Caco-2 (cell line): ENCODE measurements at regions of chr3 and their contacts with region 1.

Region 1: GRCh38 chr3:165133188-165133899 is 55.0 kb upstream of the SI start:
- DNase-seq: peak in 1 of 2 experiments; percentile 7
- H3K4me3 ChIP-seq: no peak overlapping the region
- H3K4me3 Mint-ChIP-seq: peak overlapping the region; percentile 30
- H3K27ac Mint-ChIP-seq: no peak overlapping the region
- H3K4me1 ChIP-seq: peaks cover 14% of the 10 kb centered on the region
- H3K4me1 Mint-ChIP-seq: peaks cover 7% of the 10 kb centered on the region
- H3K27me3 ChIP-seq: no peaks in the 10 kb centered on the region
- H3K27me3 Mint-ChIP-seq: no peaks in the 10 kb centered on the region
- CTCF ChIP-seq: no peak

Region 2: GRCh38 chr3:165075695-165076094 is 57.6 kb before region 1 on chr3:
- CTCF ChIA-PET with region 1: no interaction called
- POLR2A ChIA-PET with region 1: no interaction called
- intact Hi-C with region 1: loop called (anchors 1 kb)
- DNase-seq: no peak
- H3K4me3 ChIP-seq: no peak overlapping the region
- H3K4me3 Mint-ChIP-seq: no peak overlapping the region
- H3K27ac Mint-ChIP-seq: no peak overlapping the region
- H3K4me1 ChIP-seq: no peaks in the 10 kb centered on the region
- H3K4me1 Mint-ChIP-seq: no peaks in the 10 kb centered on the region
- H3K27me3 ChIP-seq: no peaks in the 10 kb centered on the region
- H3K27me3 Mint-ChIP-seq: no peaks in the 10 kb centered on the region
- CTCF ChIP-seq: no peak

Region 3: GRCh38 chr3:165082650-165083049 is 50.7 kb before region 1 on chr3:
- CTCF ChIA-PET with region 1: no interaction called
- POLR2A ChIA-PET with region 1: no interaction called
- intact Hi-C with region 1: loop called (anchors 1 kb)
- DNase-seq: no peak
- H3K4me3 ChIP-seq: no peak overlapping the region
- H3K4me3 Mint-ChIP-seq: no peak overlapping the region
- H3K27ac Mint-ChIP-seq: no peak overlapping the region
- H3K4me1 ChIP-seq: no peaks in the 10 kb centered on the region
- H3K4me1 Mint-ChIP-seq: no peaks in the 10 kb centered on the region
- H3K27me3 ChIP-seq: no peaks in the 10 kb centered on the region
- H3K27me3 Mint-ChIP-seq: no peaks in the 10 kb centered on the region
- CTCF ChIP-seq: no peak

Region 4: DNA sequence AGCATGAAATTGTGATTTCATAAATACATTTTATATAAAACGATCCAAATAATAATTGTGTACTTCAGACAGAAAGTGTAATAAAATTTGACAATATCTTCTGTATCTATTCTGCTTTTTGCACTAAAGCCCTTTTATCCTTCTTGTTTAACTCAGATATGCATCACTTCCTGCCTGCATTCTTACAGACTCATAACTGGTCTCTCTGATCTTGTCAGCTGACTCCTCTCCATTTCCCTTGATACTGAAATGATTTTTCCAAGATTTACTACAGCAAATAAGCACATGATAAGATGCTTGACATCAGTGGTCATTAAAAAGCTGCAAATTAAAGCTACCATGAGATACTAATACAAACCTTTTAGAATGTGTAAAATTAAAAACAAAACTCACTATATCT is 29.7 kb before region 1 on chr3:
- CTCF ChIA-PET with region 1: no interaction called
- POLR2A ChIA-PET with region 1: no interaction called
- intact Hi-C with region 1: no loop called
- DNase-seq: no peak
- H3K4me3 ChIP-seq: no peak overlapping the region
- H3K4me3 Mint-ChIP-seq: no peak overlapping the region
- H3K27ac Mint-ChIP-seq: no peak overlapping the region
- H3K4me1 ChIP-seq: no peaks in the 10 kb centered on the region
- H3K4me1 Mint-ChIP-seq: no peaks in the 10 kb centered on the region
- H3K27me3 ChIP-seq: no peaks in the 10 kb centered on the region
- H3K27me3 Mint-ChIP-seq: peaks cover 3% of the 10 kb centered on the region
- CTCF ChIP-seq: no peak

Region 5: GRCh38 chr3:165206454-165207266 is 73.3 kb after region 1 on chr3:
- CTCF ChIA-PET with region 1: no interaction called
- POLR2A ChIA-PET with region 1: no interaction called
- intact Hi-C with region 1: no loop called
- DNase-seq: peak; percentile 57 to 67
- H3K4me3 ChIP-seq: no peak overlapping the region
- H3K4me3 Mint-ChIP-seq: peak overlapping the region; percentile 67
- H3K27ac Mint-ChIP-seq: no peak overlapping the region
- H3K4me1 ChIP-seq: no peaks in the 10 kb centered on the region
- H3K4me1 Mint-ChIP-seq: peaks cover 6% of the 10 kb centered on the region
- H3K27me3 ChIP-seq: no peaks in the 10 kb centered on the region
- H3K27me3 Mint-ChIP-seq: peaks cover 7% of the 10 kb centered on the region
- CTCF ChIP-seq: peak; percentile 71 to 99